ENCODE measurements at regions of chr1 and their contacts with region 1.

Region 1: GRCh38 chr1:199272643-199273086 is 633.8 kb downstream of the PTPRC start:
- DNase-seq: peak; percentile 94
- ATAC-seq: peak; percentile 88
- H3K4me3 ChIP-seq: no peak overlapping the region
- H3K27ac ChIP-seq: no peak overlapping the region
- H3K4me1 ChIP-seq: peaks cover 5% of the 10 kb centered on the region
- H3K27me3 ChIP-seq: no peaks in the 10 kb centered on the region
- CTCF ChIP-seq: no peak
- POLR2A ChIP-seq: no peak
- RAD21 ChIP-seq: no peak

Region 2: GRCh38 chr1:199123615-199124014 is 149.1 kb before region 1 on chr1:
- CTCF ChIA-PET with region 1: no interaction called
- POLR2A ChIA-PET with region 1: no interaction called
- dilution Hi-C with region 1: no loop called
- in situ Hi-C with region 1: no loop called
- intact Hi-C with region 1: loop called (anchors 5 kb)
- DNase-seq: peak; percentile 85
- ATAC-seq: peak; percentile 94
- H3K4me3 ChIP-seq: no peak overlapping the region
- H3K27ac ChIP-seq: no peak overlapping the region
- H3K4me1 ChIP-seq: peaks cover 4% of the 10 kb centered on the region; the same call in 1 of the 2 replicates
- H3K27me3 ChIP-seq: no peaks in the 10 kb centered on the region
- CTCF ChIP-seq: no peak
- POLR2A ChIP-seq: no peak
- RAD21 ChIP-seq: no peak

Region 3: GRCh38 chr1:199194865-199195264 is 77.8 kb before region 1 on chr1:
- CTCF ChIA-PET with region 1: no interaction called
- POLR2A ChIA-PET with region 1: no interaction called
- dilution Hi-C with region 1: no loop called
- in situ Hi-C with region 1: no loop called
- intact Hi-C with region 1: no loop called
- DNase-seq: no peak
- ATAC-seq: no peak
- H3K4me3 ChIP-seq: no peak overlapping the region
- H3K27ac ChIP-seq: no peak overlapping the region
- H3K4me1 ChIP-seq: no peaks in the 10 kb centered on the region
- H3K27me3 ChIP-seq: no peaks in the 10 kb centered on the region
- CTCF ChIP-seq: no peak
- POLR2A ChIP-seq: no peak
- RAD21 ChIP-seq: no peak

Region 4: GRCh38 chr1:199399996-199400724 is 127.5 kb after region 1 on chr1:
- CTCF ChIA-PET with region 1: no interaction called
- POLR2A ChIA-PET with region 1: no interaction called
- dilution Hi-C with region 1: no loop called
- in situ Hi-C with region 1: no loop called
- intact Hi-C with region 1: loop called (anchors 10 kb)
- DNase-seq: no peak
- ATAC-seq: no peak
- H3K4me3 ChIP-seq: no peak overlapping the region
- H3K27ac ChIP-seq: no peak overlapping the region
- H3K4me1 ChIP-seq: peaks cover 4% of the 10 kb centered on the region
- H3K27me3 ChIP-seq: no peaks in the 10 kb centered on the region
- CTCF ChIP-seq: no peak
- POLR2A ChIP-seq: no peak
- RAD21 ChIP-seq: no peak

Region 5: DNA sequence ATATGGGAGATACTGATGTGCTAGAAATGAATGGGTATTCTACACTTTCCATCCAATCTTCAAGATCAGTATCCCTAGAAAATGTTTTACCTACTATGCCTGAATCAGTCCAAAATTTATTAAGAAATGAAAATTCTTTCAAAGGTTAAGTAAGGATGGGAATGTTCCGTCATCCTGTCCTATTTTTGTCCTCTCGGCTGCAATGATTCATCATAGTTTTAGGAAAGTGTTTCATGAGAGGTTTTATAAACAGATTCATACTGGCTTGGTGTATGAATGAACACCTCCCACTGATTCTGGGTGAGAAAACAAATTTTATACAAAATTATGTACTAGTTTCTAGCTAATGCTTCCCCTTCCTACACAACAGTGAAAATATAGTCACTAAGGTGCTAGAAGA is 250.3 kb after region 1 on chr1:
- CTCF ChIA-PET with region 1: no interaction called
- POLR2A ChIA-PET with region 1: no interaction called
- dilution Hi-C with region 1: no loop called
- in situ Hi-C with region 1: no loop called
- intact Hi-C with region 1: no loop called
- DNase-seq: peak; percentile 20
- ATAC-seq: no peak; the same call in 1 of the 2 replicates
- H3K4me3 ChIP-seq: no peak overlapping the region
- H3K27ac ChIP-seq: no peak overlapping the region
- H3K4me1 ChIP-seq: no peaks in the 10 kb centered on the region
- H3K27me3 ChIP-seq: no peaks in the 10 kb centered on the region
- CTCF ChIP-seq: no peak
- POLR2A ChIP-seq: no peak
- RAD21 ChIP-seq: no peak

Region 6: GRCh38 chr1:200029035-200029821 is 756.6 kb after region 1 on chr1:
- CTCF ChIA-PET with region 1: no interaction called
- POLR2A ChIA-PET with region 1: no interaction called
- dilution Hi-C with region 1: no loop called
- in situ Hi-C with region 1: no loop called
- intact Hi-C with region 1: no loop called
- DNase-seq: peak; percentile 36
- ATAC-seq: peak; percentile 96
- H3K4me3 ChIP-seq: peak overlapping the region; percentile 63
- H3K27ac ChIP-seq: no peak overlapping the region
- H3K4me1 ChIP-seq: 0 out of 2 replicates have a peak, but pooled peaks cover 2% of the 10 kb centered on the region
- H3K27me3 ChIP-seq: peaks cover 57% of the 10 kb centered on the region
- CTCF ChIP-seq: no peak
- POLR2A ChIP-seq: no peak
- RAD21 ChIP-seq: no peak